Aorta (tissue), 5 donors: ENCODE measurements at regions of chr22 and their contacts with region 1.

Region 1: DNA sequence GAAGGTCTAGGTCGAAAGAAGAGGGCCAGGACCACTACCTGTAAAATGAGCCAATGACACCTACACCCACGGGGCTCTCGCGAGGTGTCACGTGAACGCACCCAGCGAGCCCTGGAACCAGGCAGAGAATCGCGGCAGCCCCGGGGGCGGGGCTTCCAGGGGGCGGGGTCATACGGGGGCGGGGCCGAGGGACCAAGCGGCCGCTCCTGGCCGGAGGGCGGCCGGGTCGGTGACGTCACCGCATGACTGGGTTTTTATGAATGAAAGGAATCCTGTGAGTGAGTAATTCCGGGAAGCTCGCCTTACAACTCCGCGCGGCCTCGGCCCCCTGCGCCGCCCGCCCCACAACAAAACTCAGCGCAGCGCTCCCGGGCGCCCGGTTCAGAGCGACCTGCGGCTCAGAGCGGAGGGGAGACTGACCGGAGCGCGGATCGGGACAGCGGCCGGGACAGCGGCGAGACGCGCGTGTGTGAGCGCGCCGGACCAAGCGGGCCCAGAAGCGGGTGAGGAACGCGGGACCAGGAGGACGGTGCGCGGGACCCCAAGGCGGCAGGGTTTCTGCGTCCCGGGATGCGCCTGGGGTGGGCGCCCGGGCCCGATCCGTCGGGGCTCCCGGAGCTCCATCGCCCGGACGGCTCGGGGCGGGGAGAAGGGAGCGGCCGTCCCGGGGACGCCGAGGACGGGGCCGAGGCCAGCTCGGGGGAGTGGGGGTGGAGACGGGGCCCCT is at the start of gene MAFF:
- DNase-seq: peak; percentile 98 to 99
- ATAC-seq: peak; percentile 89
- H3K4me3 ChIP-seq: peak within 1 kb of the TSS; percentile 38 to 70
- H3K27ac ChIP-seq: peak within 1 kb of the TSS; percentile 97 to 99
- H3K4me1 ChIP-seq: no peaks in the 10 kb centered on the region
- H3K27me3 ChIP-seq: no peaks in the 10 kb centered on the region
- total RNA-seq, gene MAFF: 73.1 to 145 TPM

Region 2: GRCh38 chr22:37887610-37888378 is 314.1 kb before region 1 on chr22:
- intact Hi-C with region 1: no loop called
- DNase-seq: peak in 1 of 2 donors; percentile 60
- ATAC-seq: peak; percentile 82
- H3K4me3 ChIP-seq: no peak overlapping the region
- H3K27ac ChIP-seq: no peak overlapping the region
- H3K4me1 ChIP-seq: peaks cover 0 to 2% of the 10 kb centered on the region in 2 donors
- H3K27me3 ChIP-seq: no peaks in the 10 kb centered on the region

Region 3: DNA sequence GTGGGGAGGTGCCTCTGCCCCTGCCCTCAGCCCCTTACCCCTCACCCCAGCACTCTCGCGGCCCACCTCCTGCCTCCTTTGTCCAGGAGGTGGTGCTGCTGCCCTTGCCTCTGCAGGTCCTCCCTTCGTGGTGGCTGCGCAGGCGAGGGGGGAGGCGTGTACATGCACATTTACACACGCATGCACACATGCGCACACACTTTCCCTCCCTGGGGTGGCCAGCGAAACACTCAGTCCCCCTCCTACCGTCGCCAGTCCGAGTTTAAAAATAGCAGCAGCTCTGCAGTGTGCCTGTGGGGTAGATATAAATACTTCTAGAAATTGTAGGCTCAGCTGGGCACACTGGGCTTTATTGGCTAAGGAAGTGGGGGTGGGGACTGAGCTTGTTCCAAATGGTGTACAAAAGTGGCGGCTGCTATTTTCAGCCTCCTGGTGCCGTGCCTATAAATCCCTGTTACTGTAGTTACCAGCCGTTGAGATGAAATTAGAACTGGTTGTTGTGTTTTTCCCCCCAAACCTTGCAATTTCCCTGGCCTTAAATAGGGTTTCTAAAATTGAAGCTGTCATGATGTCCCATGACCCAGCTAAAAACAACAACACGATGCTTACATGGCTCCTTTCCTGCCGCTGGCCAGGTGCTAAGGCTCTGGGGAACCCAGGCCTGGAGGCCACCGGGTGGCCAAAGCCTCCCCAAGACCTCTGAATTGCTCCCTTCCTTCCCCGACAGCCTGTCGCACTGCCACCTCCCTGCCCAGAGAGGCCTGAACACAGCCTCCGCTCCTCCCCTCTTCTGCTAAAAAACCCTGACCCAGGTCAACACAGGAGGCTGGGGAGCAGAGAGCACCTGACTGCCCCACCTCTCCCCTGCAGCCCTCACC is 132.3 kb before region 1 on chr22:
- intact Hi-C with region 1: loop called in 1 of 2 experiments (anchors 5 kb)
- DNase-seq: peak; percentile 94 to 95
- ATAC-seq: peak; percentile 88
- H3K4me3 ChIP-seq: no peak overlapping the region
- H3K27ac ChIP-seq: peak overlapping the region; percentile 89 to 94
- H3K4me1 ChIP-seq: no peaks in the 10 kb centered on the region
- H3K27me3 ChIP-seq: no peaks in the 10 kb centered on the region

Region 4: GRCh38 chr22:38135133-38135751 is 66.6 kb before region 1 on chr22:
- intact Hi-C with region 1: no loop called
- DNase-seq: peak; percentile 51 to 68
- ATAC-seq: no peak
- H3K4me3 ChIP-seq: no peak overlapping the region
- H3K27ac ChIP-seq: no peak overlapping the region
- H3K4me1 ChIP-seq: no peaks in the 10 kb centered on the region
- H3K27me3 ChIP-seq: no peaks in the 10 kb centered on the region

Region 5: GRCh38 chr22:38239101-38239761 is 37.4 kb after region 1 on chr22:
- intact Hi-C with region 1: no loop called
- DNase-seq: peak in 1 of 2 donors; percentile 76
- ATAC-seq: peak; percentile 64
- H3K4me3 ChIP-seq: no peak overlapping the region
- H3K27ac ChIP-seq: peak overlapping the region in 1 of 2 donors; percentile 58
- H3K4me1 ChIP-seq: no peaks in the 10 kb centered on the region
- H3K27me3 ChIP-seq: no peaks in the 10 kb centered on the region

Region 6: DNA sequence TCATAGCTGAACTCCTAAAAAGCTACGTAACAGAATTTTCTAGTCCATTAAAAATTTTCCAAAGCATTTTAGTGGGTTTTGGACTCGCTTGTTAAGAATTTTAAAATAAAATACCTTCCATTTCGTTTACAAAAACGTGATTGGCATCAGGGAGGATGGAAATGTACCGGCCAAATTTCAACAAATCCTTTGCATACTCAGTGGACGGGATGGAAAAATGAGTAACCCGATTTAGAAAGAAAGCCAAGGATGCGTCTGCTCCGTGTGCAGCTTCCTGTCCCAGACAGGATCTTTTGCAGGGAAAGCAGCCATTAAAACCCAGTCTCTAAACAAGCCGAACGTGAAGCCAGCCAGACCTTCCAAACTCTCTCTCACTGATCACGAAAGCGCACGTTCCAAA is 55.3 kb after region 1 on chr22:
- intact Hi-C with region 1: loop called in 1 of 2 experiments (anchors 5 kb)
- DNase-seq: no peak
- ATAC-seq: peak; percentile 60
- H3K4me3 ChIP-seq: no peak overlapping the region
- H3K27ac ChIP-seq: peak overlapping the region; percentile 38 to 79
- H3K4me1 ChIP-seq: peaks cover 0 to 8% of the 10 kb centered on the region in 2 donors
- H3K27me3 ChIP-seq: no peaks in the 10 kb centered on the region

Region 7: GRCh38 chr22:38317122-38317994 is 115.5 kb after region 1 on chr22 and contains the start of gene CSNK1E:
- intact Hi-C with region 1: loop called (anchors 5 to 10 kb)
- DNase-seq: peak; percentile 86 to 94
- ATAC-seq: peak; percentile 84
- H3K4me3 ChIP-seq: peak within 1 kb of the TSS; percentile 86 to 92
- H3K27ac ChIP-seq: peak within 1 kb of the TSS; percentile 94 to 95
- H3K4me1 ChIP-seq: peaks cover 0 to 2% of the 10 kb centered on the region in 2 donors
- H3K27me3 ChIP-seq: no peaks in the 10 kb centered on the region
- total RNA-seq, gene CSNK1E: 144 to 167 TPM